ENCODE measurements at regions of chr9 and their contacts with region 1.

Region 1: GRCh38 chr9:99112750-99113413 is 8.0 kb downstream of the TGFBR1 start:
- DNase-seq: peak; percentile 72
- H3K4me3 ChIP-seq: peak overlapping the region; percentile 35
- H3K27ac ChIP-seq: peak overlapping the region; percentile 77
- H3K4me1 ChIP-seq: peaks cover 94% of the 10 kb centered on the region
- CTCF ChIP-seq: no peak

Region 2: GRCh38 chr9:99006254-99006910 is 106.5 kb before region 1 on chr9:
- CTCF ChIA-PET with region 1: no interaction called
- POLR2A ChIA-PET with region 1: no interaction called
- intact Hi-C with region 1: no loop called
- DNase-seq: no peak
- H3K4me3 ChIP-seq: no peak overlapping the region
- H3K27ac ChIP-seq: no peak overlapping the region
- H3K4me1 ChIP-seq: no peaks in the 10 kb centered on the region
- CTCF ChIP-seq: no peak

Region 3: DNA sequence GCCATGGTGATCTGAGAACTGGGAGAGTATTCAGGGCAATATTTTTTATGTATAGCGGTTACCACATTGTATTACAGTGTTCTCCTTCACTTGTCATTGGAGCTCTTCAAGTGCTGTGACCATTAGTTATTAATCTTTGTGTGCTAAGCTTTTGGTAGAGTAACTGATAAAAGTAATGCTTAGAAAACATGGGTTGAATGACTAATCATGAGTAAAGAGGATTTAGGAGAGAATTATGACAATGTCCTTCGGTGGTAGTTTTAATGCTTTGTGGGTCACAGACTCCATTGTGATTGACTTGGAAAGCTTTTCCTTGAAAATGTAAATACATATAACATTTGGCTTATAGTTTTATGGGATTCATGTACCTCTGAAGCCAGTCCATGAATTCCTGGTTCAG is 13.4 kb after region 1 on chr9:
- CTCF ChIA-PET with region 1: no interaction called
- POLR2A ChIA-PET with region 1: interaction called, 12 read pairs
- intact Hi-C with region 1: no loop called
- DNase-seq: no peak
- H3K4me3 ChIP-seq: no peak overlapping the region
- H3K27ac ChIP-seq: no peak overlapping the region
- H3K4me1 ChIP-seq: peaks cover 78% of the 10 kb centered on the region
- CTCF ChIP-seq: no peak

Measured in OCI-LY7 (cell line).